ENCODE measurements at regions of chr2 and their contacts with region 1.

Region 1: GRCh38 chr2:112726497-112727190 is 5.8 kb downstream of the NT5DC4 start:
- DNase-seq: peak; percentile 85 to 92
- ATAC-seq: peak; percentile 93

Region 2: GRCh38 chr2:112626604-112627059 is 100.0 kb before region 1 on chr2:
- intact Hi-C with region 1: loop called (anchors 5 to 10 kb)
- DNase-seq: peak in 1 of 2 donors; percentile 59
- ATAC-seq: peak; percentile 63